Activated B cell treated with CpG ODN at 0.5 μM for 24 hours (primary cell): ENCODE measurements at regions of chr7 and their contacts with region 1.

Region 1: DNA sequence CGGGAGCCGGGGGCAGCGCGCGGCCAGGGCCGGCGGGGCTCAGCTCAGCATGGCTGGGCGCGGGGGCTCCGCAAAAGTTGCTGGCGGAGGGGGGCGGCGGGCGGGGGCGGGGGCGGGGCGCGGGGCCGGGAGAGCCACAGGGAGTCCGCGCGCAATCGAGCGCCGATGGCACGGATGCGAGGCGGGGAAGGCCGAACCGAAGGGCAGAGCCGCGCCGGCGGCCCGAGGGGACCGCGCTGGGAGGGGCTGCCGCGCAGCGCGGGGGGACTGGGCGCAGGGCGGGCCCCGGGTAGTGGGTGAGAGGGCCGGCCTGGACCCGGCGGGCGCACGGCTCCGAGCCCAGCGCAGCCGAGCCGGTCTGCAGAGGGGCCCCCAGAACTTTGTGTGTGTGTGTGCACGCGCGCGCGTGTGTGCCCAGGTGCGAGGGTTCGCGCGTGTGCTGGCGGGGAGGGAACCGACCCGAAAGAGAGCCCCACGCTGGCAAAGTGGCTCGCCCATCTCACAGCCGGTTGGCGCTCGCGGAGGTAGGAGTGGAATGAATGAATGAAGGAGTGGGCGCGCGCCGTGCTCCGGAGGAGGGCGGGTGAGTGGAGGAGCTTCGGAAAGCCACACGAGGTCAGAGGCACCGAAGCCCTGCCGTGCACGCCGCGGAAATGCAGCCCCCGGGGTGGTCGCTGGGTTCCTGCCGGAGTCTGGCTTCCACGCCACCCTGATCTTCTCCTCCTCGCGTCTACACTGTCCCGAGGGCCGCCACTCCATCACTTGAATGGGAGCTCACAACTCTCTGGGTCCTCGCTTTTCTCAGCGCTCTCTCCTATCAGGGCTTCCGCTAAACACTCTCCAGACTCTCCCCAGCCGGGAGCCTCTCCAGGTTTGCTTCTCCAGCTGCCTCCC is at the start of gene HIPK2:
- DNase-seq: peak; percentile 71
- ATAC-seq: peak; percentile 81
- H3K4me3 Mint-ChIP-seq: peak within 1 kb of the TSS; percentile 99
- H3K27ac Mint-ChIP-seq: peak within 1 kb of the TSS; percentile 94
- H3K4me1 Mint-ChIP-seq: peaks cover 39% of the 10 kb centered on the region
- H3K27me3 Mint-ChIP-seq: peaks cover 3% of the 10 kb centered on the region
- CTCF ChIP-seq: no peak
- total RNA-seq, gene HIPK2: 21.1 and 23.0 TPM in 2 replicates

Region 2: DNA sequence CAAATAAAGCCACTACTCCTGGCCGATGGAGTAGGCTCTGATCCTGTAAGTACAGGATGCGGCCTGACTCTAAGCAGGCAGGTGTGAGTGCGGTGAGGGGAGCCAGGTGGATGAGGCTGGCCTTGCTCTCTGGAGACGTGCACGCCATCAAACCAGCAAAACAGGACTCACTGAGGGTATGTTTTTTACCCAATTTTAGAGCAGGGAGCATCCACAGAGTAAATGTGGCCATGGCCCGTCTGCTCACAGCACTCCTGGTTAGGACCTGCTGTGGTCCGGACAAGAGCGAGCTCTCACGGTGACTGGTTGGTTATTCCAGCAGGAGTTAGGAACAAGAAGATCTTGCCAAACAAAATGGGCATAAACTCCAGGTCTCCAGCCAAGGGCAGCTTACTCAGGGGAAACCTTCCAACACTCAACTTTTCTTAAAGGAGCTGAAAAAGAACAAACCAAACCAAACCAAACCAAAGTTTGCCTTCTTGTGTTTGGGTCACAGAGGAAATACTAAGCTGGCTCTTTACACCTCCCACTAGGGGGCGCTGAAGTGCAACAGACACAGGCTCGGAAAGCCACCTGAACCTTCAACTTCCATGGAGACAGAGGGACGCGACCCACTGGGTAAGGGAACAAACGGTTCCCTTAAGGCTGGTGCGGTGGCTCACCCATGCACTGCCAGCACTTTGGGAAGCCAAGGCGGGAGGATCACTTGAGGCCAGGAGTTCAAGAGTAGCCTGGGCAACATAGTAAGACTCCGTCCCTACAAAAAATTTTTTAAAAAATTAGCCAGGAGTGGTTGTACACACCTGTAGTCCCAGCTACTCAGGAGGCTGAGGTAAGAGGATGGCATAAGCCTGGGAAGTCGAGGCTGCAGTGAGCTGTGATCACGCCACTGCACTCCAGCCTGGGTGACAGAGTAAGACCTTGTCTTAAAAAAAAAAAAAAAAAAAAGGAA is 132.3 kb before region 1 on chr7:
- CTCF ChIA-PET with region 1: interaction called, 5 read pairs
- POLR2A ChIA-PET with region 1: interaction called, 7 read pairs
- intact Hi-C with region 1: loop called (anchors 1 kb)
- DNase-seq: peak; percentile 65
- ATAC-seq: peak; percentile 59
- H3K4me3 Mint-ChIP-seq: no peak overlapping the region
- H3K27ac Mint-ChIP-seq: no peak overlapping the region
- H3K4me1 Mint-ChIP-seq: peaks cover 39% of the 10 kb centered on the region
- H3K27me3 Mint-ChIP-seq: no peaks in the 10 kb centered on the region
- CTCF ChIP-seq: peak; percentile 79

Region 3: DNA sequence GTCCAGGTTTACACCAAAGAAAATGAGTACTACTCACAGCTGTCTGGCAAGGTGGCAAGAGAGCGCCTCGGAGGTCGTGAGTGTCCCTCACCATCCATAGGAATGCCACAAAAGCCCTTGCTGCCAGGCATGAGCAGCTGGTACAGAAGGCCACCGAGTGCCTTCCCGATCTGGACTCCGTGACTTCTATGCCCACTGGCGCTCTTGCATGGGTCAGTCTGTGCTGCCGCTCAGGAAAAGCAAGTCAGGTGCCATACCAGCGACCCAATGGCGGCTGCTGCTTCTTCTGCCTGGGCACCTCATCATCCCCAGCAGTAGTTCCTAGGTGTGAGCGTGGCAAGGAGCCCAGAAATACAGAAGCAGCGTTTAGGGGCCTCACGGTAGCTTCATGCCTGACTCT is 62.6 kb after region 1 on chr7:
- CTCF ChIA-PET with region 1: no interaction called
- POLR2A ChIA-PET with region 1: no interaction called
- intact Hi-C with region 1: no loop called
- DNase-seq: no peak
- ATAC-seq: no peak
- H3K4me3 Mint-ChIP-seq: no peak overlapping the region
- H3K27ac Mint-ChIP-seq: no peak overlapping the region
- H3K4me1 Mint-ChIP-seq: peaks cover 12% of the 10 kb centered on the region
- H3K27me3 Mint-ChIP-seq: no peaks in the 10 kb centered on the region
- CTCF ChIP-seq: no peak

Region 4: GRCh38 chr7:139855498-139856270 is 77.5 kb after region 1 on chr7:
- CTCF ChIA-PET with region 1: no interaction called
- POLR2A ChIA-PET with region 1: interaction called, 3 read pairs
- intact Hi-C with region 1: loop called (anchors 5 kb)
- DNase-seq: peak; percentile 20
- ATAC-seq: peak; percentile 68
- H3K4me3 Mint-ChIP-seq: no peak overlapping the region
- H3K27ac Mint-ChIP-seq: peak overlapping the region; percentile 63
- H3K4me1 Mint-ChIP-seq: peaks cover 30% of the 10 kb centered on the region
- H3K27me3 Mint-ChIP-seq: no peaks in the 10 kb centered on the region
- CTCF ChIP-seq: no peak

Region 5: DNA sequence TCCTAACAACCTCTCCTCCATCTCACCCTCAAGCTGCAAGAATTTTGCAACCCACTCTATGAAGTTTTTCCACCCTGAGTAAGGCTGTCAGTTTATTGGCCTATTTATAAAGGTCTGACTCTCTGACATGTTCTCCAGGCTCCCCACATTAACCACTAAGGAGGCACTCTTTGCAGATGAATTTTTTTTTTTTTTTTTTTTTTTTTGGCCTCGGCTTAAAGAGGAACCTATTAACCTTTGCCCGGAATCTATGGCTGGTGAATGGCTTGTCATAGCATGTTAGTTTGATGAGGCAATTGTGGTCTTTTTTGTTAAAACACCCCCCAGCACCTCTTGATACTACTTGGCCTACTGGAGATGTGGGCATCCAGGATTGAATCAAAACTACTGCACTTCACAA is 108.0 kb after region 1 on chr7:
- CTCF ChIA-PET with region 1: no interaction called
- POLR2A ChIA-PET with region 1: no interaction called
- intact Hi-C with region 1: no loop called
- DNase-seq: no peak
- ATAC-seq: no peak
- H3K4me3 Mint-ChIP-seq: no peak overlapping the region
- H3K27ac Mint-ChIP-seq: no peak overlapping the region
- H3K4me1 Mint-ChIP-seq: no peaks in the 10 kb centered on the region
- H3K27me3 Mint-ChIP-seq: peaks cover 2% of the 10 kb centered on the region
- CTCF ChIP-seq: no peak

Region 6: DNA sequence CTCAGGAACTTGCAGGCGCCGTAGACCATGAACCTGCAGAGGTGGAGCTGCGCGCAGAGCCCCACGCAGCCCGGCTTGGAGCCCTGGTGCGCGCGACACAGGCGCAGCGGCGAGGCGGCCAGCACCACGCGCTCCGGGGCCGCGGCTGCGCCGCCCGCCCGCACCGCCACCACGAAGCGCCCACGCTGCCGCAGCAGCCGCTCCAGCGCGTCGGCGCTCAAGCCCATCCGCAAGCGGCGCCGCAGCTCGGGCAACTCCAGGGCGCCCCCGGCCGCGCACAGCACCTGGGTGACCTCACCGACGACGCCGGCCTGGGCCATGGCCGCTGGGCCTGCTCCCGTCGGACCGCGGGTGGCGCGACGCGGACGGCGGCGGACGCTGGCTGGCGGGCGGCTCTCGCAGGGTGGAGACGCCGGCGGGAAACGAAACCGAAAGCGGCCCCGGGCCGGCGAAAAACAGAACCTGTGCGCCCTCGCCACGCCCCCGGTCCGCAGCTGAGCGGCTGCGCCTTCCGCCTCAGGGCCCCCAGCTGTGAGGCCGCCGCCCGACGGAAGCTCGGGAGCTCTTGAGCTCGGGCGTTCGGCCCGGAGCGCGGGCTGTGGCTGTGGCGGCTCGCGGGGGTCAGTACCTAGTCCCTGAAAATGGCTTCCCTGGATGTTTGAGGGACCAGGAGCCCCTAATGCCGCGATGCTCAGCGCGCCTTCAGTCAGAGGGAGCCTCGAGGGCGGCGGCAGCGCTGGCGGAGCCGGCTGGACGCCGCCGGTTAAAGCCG is 284.5 kb after region 1 on chr7 and contains the start of gene PARP12:
- CTCF ChIA-PET with region 1: no interaction called
- POLR2A ChIA-PET with region 1: no interaction called
- intact Hi-C with region 1: loop called (anchors 1 kb)
- DNase-seq: peak; percentile 93
- ATAC-seq: peak; percentile 81
- H3K4me3 Mint-ChIP-seq: peak within 1 kb of the TSS; percentile 97
- H3K27ac Mint-ChIP-seq: peak within 1 kb of the TSS; percentile 98
- H3K4me1 Mint-ChIP-seq: peaks cover 47% of the 10 kb centered on the region
- H3K27me3 Mint-ChIP-seq: no peaks in the 10 kb centered on the region
- CTCF ChIP-seq: no peak
- total RNA-seq, gene PARP12: 104 and 128 TPM in 2 replicates

Region 7: DNA sequence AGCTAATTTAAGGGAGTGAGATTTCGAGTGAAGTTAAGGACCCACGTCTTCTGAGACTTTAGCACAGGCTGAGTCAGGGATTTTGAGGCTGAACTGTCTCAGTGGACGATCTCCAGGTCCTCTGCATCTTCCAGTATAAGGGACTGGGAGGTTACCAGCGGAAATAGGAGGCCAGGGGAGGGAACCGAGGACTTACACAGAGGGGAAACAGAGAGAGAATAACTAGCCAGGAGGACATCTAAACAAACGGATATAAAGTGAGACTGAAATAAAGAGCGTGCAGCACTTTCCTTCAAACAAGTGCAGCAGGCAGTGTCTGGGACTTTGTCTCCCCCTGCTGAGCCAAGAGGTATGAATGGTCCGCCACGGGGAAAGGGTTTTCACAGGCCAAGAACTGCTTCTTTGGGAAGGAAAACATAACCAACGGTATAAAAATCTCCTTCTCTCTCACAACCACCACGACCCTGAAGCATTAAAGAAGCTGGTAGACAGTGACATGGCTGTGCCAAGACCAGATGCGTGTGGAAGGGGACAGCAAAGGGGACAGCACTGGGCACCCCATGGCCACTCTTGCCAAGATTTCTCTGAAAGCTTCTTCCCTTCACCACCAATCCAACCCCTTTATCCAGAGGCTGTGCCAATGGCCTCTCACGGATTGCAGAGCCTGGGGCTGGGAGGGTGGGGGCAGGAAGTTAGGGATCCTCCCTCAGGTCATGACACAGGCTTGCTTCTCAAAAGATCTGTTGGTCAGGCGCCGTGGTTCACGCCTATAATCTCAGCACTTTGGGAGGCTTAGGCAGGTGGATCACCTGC is 548.1 kb after region 1 on chr7:
- CTCF ChIA-PET with region 1: no interaction called
- POLR2A ChIA-PET with region 1: no interaction called
- intact Hi-C with region 1: loop called (anchors 1 kb)
- DNase-seq: peak; percentile 21
- ATAC-seq: peak; percentile 75
- H3K4me3 Mint-ChIP-seq: no peak overlapping the region
- H3K27ac Mint-ChIP-seq: no peak overlapping the region
- H3K4me1 Mint-ChIP-seq: no peaks in the 10 kb centered on the region
- H3K27me3 Mint-ChIP-seq: no peaks in the 10 kb centered on the region
- CTCF ChIP-seq: no peak

Region 8: DNA sequence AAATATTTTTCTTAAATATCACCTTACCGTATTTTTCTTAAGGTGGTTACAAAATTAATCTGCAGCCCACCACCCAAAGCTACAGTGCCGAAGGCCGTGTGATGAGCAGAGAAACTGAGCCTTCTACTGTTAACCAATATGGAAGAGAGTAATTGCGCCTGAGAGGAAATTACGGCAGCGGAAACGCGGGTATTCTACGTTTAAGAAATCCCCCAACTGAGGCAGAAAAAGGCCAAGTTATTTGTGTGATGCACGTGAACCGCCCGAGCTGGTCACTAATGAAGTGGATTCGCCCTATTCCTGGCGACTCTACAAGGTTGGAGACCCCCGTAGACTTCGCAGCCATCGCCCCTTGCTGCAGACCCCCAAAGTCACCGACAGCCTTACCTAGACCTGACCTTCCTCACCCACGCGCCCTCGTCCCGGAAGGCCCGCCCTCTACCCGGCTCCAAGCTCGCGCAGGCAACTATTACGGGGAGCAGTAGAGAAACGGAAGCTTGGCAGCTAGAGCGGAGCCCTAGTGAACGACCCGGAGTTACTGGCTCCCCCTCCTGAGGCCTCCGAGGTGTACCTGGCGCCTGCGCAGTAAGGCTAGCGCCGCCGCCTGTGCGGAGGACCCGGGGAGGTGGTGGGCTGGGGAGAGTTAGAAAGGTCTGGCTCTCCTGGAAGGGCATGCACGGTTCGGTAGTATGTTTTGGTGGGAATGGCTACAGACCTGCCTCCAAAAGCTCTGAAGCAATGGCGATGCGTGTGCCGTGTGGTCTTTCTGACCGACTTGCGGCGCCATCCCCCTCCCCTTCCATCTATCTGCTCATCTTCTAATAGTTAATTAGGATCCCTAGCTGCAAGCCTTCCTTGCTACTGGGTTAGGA is 1236.6 kb after region 1 on chr7 and contains the start of gene MRPS33:
- CTCF ChIA-PET with region 1: no interaction called
- POLR2A ChIA-PET with region 1: no interaction called
- intact Hi-C with region 1: loop called (anchors 2 kb)
- DNase-seq: peak; percentile 86
- ATAC-seq: peak; percentile 98
- H3K4me3 Mint-ChIP-seq: peak within 1 kb of the TSS; percentile 99
- H3K27ac Mint-ChIP-seq: peak within 1 kb of the TSS; percentile 100
- H3K4me1 Mint-ChIP-seq: peaks cover 20% of the 10 kb centered on the region
- H3K27me3 Mint-ChIP-seq: peaks cover 13% of the 10 kb centered on the region
- CTCF ChIP-seq: no peak
- total RNA-seq, gene MRPS33: 37.5 and 46.4 TPM in 2 replicates